ENCODE measurements at regions of chr16 and their contacts with region 1.

Region 1: DNA sequence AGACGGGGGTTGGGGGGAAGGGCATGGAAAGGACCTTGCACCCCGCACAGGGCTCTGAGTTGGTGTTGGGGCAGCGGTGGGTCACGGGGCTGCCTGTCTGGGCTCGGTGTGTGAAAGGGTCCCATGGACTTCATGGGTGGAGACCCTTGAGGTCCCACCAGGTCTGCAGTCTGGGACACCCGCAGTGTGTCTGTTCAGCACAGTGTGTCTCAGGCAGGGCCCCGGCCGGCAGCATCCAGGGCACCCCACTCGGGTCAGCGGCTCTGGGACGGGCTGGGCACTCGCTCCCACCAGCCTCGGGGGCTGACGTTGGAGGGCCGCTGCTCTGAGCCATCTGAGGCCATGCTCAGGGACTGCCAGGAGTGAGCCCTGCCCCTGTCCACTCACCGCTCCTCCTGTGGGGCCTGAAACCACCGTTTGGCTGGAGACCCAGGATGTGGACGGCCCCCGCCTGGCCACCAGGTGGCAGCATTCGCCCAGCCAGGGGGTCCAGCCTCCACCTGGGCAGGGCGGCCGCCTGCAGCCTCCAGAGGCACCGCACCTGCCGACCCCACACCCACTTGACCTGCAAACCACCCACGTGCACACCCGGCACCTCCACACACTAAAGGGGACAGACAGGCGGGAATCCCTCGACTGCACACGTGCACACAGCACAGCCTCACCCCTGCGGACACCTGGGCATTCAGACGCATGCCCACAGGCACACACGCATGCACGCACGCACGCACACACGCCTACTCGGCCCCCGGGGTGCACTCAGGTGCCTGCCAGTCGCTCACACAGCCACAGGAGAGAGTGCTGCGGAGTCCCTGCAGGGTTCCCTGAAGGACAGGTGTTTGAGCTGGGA is 10.1 kb upstream of the ZFPM1 start:
- DNase-seq: peak; percentile 82 to 88
- ATAC-seq: peak; percentile 78 to 98 (median 94)
- H3K4me3 ChIP-seq: no peak overlapping the region
- H3K4me3 Mint-ChIP-seq: no peak overlapping the region
- H3K27ac ChIP-seq: no peak overlapping the region
- H3K27ac Mint-ChIP-seq: no peak overlapping the region
- H3K4me1 ChIP-seq: peaks cover 9% of the 10 kb centered on the region
- H3K4me1 Mint-ChIP-seq: peaks cover 0 to 15% of the 10 kb centered on the region in 2 donors
- H3K27me3 ChIP-seq: no peaks in the 10 kb centered on the region
- H3K27me3 Mint-ChIP-seq: no peaks in the 10 kb centered on the region
- CTCF ChIP-seq: peak; percentile 84

Region 2: DNA sequence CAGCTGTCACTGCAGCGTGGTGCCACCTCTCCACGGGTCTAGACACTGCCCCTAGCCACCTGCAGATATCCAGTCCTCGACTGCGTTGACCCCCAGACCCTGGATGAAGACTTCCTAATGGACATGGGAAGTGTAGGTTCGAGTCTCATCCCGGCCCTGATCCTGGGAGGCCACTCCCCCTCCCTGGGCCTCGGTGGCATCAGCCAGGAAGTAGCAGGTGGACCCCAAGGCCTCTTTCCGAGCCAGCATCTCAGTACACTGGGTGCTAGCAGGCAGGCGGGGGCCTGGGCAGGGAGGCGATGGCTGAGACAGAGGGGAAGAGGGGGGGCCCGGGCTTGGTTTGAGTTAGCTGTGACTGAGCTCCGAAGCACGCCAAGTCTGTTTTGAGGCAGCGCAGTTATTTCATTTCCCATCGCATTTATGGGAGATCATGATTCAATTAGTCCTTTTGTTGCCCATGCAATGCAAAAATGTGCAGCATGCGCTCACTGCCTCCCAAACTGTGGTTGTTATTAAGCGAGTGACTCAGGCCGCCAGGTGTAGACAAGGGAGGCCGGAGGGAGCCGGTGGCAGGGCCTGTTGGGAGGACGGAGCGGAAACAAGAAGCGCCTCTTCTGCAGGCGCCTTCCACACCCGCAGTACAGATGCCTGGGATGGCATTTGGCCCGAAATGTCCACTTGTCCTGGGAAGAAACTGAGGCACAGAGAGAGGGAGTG is 85.5 kb before region 1 on chr16:
- intact Hi-C with region 1: no loop called
- DNase-seq: no peak
- ATAC-seq: peak in 1 of 3 donors; percentile 8
- H3K4me3 ChIP-seq: no peak overlapping the region
- H3K4me3 Mint-ChIP-seq: no peak overlapping the region
- H3K27ac ChIP-seq: no peak overlapping the region
- H3K27ac Mint-ChIP-seq: no peak overlapping the region
- H3K4me1 ChIP-seq: no peaks in the 10 kb centered on the region
- H3K4me1 Mint-ChIP-seq: no peaks in the 10 kb centered on the region
- H3K27me3 ChIP-seq: no peaks in the 10 kb centered on the region
- H3K27me3 Mint-ChIP-seq: peaks cover 4 to 13% of the 10 kb centered on the region in 2 donors
- CTCF ChIP-seq: no peak

Region 3: GRCh38 chr16:88527186-88527936 is 84.4 kb after region 1 on chr16:
- intact Hi-C with region 1: loop called (anchors 1 kb)
- DNase-seq: peak; percentile 69 to 78
- ATAC-seq: peak; percentile 69 to 77 (median 76)
- H3K4me3 ChIP-seq: no peak overlapping the region
- H3K4me3 Mint-ChIP-seq: no peak overlapping the region
- H3K27ac ChIP-seq: no peak overlapping the region
- H3K27ac Mint-ChIP-seq: peak overlapping the region in 1 of 2 donors; percentile 78
- H3K4me1 ChIP-seq: peaks cover 61% of the 10 kb centered on the region
- H3K4me1 Mint-ChIP-seq: peaks cover 8 to 45% of the 10 kb centered on the region in 2 donors
- H3K27me3 ChIP-seq: no peaks in the 10 kb centered on the region
- H3K27me3 Mint-ChIP-seq: no peaks in the 10 kb centered on the region
- CTCF ChIP-seq: peak; percentile 90

Region 4: GRCh38 chr16:88561485-88562369 is 118.8 kb after region 1 on chr16:
- intact Hi-C with region 1: loop called (anchors 2 kb)
- DNase-seq: peak; percentile 43 to 78
- ATAC-seq: peak; percentile 76 to 89 (median 87)
- H3K4me3 ChIP-seq: no peak overlapping the region
- H3K4me3 Mint-ChIP-seq: no peak overlapping the region
- H3K27ac ChIP-seq: no peak overlapping the region
- H3K27ac Mint-ChIP-seq: no peak overlapping the region
- H3K4me1 ChIP-seq: peaks cover 20% of the 10 kb centered on the region
- H3K4me1 Mint-ChIP-seq: peaks cover 5 to 19% of the 10 kb centered on the region in 2 donors
- H3K27me3 ChIP-seq: no peaks in the 10 kb centered on the region
- H3K27me3 Mint-ChIP-seq: no peaks in the 10 kb centered on the region
- CTCF ChIP-seq: peak; percentile 60